Dorsolateral prefrontal cortex (tissue), 120 donors: ENCODE measurements at regions of chr18 and their contacts with region 1.

Region 1: DNA sequence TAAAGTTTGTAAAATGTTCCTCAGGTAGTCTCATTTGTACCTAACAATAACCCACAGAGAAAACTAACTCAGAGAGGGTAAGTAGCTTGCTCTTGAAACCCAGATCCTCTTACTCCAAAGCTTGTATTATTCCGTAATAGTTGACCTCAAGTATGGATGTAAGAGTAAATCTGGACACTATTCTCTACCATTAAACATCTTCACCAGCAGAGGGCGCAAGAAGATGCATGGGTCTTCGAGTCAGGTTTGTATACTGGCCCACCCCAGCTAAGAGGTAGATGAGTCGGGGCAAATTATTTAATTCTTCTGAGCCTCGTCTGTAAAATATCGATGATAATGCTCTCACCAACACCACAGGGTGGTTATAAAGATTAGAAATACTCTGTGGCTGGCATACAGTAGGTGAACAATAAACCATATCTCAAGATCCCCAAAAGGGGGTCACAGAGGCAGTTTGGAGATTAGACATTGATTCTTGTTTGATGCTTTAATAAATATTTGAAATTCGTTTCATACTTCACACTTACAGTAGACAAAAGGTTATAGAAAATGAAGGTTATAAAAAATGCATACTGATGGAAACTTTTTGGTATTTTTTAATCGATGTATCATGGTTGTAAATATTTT is 3.5 kb upstream of the CABLES1 start:
- DNase-seq: peak in 3 of 10 donors; percentile 36 to 71 (median 63)
- H3K4me3 ChIP-seq: no peak overlapping the region
- H3K27ac ChIP-seq: peak overlapping the region in 1 of 59 donors; percentile 27
- H3K27me3 ChIP-seq: peaks cover 0 to 18% (median 0%) of the 10 kb centered on the region in 45 donors
- CTCF ChIP-seq: peak; percentile 63 to 90 (median 82)

Region 2: DNA sequence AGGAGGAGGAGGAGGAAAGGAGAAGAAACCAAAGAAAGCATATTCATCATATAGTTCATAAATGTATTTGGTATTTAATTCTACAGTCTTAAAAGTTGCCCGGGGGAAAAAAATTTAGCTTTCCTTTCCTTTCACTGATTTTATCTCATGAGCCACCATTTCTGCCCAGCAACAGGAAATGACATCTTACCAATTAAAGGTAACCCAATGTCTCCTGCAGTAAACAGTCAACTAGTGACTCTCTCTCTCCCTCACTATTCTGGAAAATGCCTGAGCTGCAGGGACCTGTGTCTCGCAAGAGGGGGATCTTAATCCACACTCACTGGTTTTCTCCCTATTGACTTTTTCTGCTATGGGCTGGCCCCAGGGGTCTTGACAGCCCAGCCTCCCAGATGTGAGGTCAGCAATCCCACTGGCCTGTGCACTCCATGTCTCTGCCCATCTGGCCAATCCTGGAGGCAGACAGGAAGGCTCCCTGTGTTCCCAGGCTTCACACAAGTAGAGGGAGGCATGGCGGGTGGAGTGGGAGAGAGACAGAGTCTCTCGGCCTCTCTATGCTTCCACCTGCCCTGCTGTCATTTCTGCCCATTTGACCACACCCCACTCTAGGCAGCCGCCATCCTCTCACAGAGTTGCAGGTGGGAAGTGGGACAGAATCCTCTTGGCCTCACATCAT is 82.0 kb before region 1 on chr18:
- intact Hi-C with region 1: no loop called
- DNase-seq: no peak
- H3K4me3 ChIP-seq: no peak overlapping the region
- H3K27ac ChIP-seq: no peak overlapping the region
- H3K27me3 ChIP-seq: no peaks in the 10 kb centered on the region
- CTCF ChIP-seq: no peak

Region 3: DNA sequence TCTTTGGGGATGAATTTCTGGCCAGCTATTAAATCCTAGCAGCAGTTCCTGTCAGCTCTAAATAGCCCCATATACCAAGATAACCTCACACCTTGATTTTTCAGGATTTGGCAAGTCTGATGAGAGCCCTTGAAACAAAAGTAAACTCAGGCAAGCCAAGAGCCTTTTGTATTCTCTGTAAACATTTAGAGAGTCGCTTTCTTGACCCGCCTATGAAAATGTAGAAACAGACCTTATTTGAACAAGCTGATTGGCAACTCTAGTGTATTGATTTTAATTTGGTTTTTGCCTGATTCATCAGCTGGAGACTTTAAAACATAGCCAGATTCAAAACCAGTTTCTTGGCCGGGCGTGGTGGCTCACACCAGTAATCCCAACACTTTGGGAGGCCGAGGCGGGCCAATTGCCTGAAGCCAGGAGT is 46.9 kb after region 1 on chr18:
- intact Hi-C with region 1: no loop called
- DNase-seq: no peak
- H3K4me3 ChIP-seq: no peak overlapping the region
- H3K27ac ChIP-seq: peak overlapping the region in 1 of 59 donors; percentile 7
- H3K27me3 ChIP-seq: peaks cover 0 to 3% (median 0%) of the 10 kb centered on the region in 45 donors
- CTCF ChIP-seq: no peak

Region 4: DNA sequence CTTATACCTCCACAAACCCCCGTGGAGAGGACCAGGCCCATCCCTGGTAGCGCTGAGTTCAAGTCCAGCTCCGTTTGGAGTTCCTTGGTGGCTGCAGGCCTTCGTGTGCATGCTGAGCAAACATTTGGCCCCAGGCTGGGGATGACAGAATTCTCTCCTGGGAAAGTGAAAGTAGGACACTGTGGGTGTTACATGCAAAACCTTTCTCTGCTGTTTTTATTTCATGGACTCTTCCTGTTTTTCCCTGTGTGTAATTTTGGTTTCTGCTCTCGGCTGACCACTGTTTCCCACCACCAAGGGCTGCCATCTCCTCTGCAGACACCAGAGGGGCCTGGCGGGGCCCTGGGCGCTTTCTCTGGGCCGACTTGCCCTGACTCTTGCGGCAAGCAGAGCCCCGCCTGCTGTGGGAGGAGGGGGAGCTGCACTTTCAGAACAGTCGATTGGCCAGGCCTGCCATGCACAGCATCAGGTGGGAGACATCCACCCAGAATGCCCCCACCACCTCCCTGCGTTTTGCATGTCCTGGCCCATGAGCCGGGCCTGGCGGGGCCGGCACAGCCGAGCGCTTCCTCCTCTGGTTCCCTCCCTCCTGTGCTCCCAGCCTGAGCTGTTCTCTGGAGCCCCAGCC is 105.8 kb after region 1 on chr18:
- intact Hi-C with region 1: loop called in 1 of 2 experiments (anchors 5 kb)
- DNase-seq: peak in 5 of 10 donors; percentile 25 to 62 (median 55)
- H3K4me3 ChIP-seq: peak overlapping the region in 56 of 59 donors; percentile 5 to 66 (median 43)
- H3K27ac ChIP-seq: peak overlapping the region in 58 of 59 donors; percentile 42 to 95 (median 85)
- H3K27me3 ChIP-seq: no peaks in the 10 kb centered on the region
- CTCF ChIP-seq: peak in 3 of 56 donors; percentile 7 to 33 (median 15)